ENCODE measurements at regions of chr17 and their contacts with region 1.

Region 1: GRCh38 chr17:48724251-48725003 is 1.4 kb downstream of the PRAC2 start:
- DNase-seq: peak in 1 of 2 experiments; percentile 88
- H3K4me3 ChIP-seq: no peak overlapping the region
- H3K27ac ChIP-seq: no peak overlapping the region
- H3K4me1 ChIP-seq: peaks cover 11 to 32% (median 15%) of the 10 kb centered on the region in 4 experiments; a peak in 6 of 7 replicates
- H3K27me3 ChIP-seq: peaks cover 98 to 100% (median 99%) of the 10 kb centered on the region in 4 experiments
- CTCF ChIP-seq: peak; percentile 60 to 70 (median 68)
- EP300 ChIP-seq: no peak
- POLR2A ChIP-seq: no peak
- RAD21 ChIP-seq: peak; percentile 73 to 74

Region 2: GRCh38 chr17:48704361-48705248 is 19.8 kb before region 1 on chr17:
- CTCF ChIA-PET with region 1: interaction called, 45 read pairs
- POLR2A ChIA-PET with region 1: interaction called, 3 read pairs
- DNase-seq: no peak
- H3K4me3 ChIP-seq: no peak overlapping the region
- H3K27ac ChIP-seq: no peak overlapping the region
- H3K4me1 ChIP-seq: no peaks in the 10 kb centered on the region
- H3K27me3 ChIP-seq: peaks cover 0 to 13% (median 5%) of the 10 kb centered on the region in 4 experiments; a peak in 4 of 7 replicates
- CTCF ChIP-seq: no peak
- EP300 ChIP-seq: no peak
- POLR2A ChIP-seq: no peak
- RAD21 ChIP-seq: no peak

Region 3: GRCh38 chr17:48747445-48748363 is 23.3 kb after region 1 on chr17:
- CTCF ChIA-PET with region 1: interaction called, 44 read pairs
- POLR2A ChIA-PET with region 1: interaction called, 6 read pairs
- DNase-seq: peak in 1 of 2 experiments; percentile 64
- H3K4me3 ChIP-seq: peak overlapping the region in 1 of 4 experiments; percentile 10; a peak in 1 of 8 replicates
- H3K27ac ChIP-seq: no peak overlapping the region
- H3K4me1 ChIP-seq: peaks cover 3 to 7% (median 5%) of the 10 kb centered on the region in 4 experiments
- H3K27me3 ChIP-seq: peaks cover 93 to 100% (median 98%) of the 10 kb centered on the region in 4 experiments
- CTCF ChIP-seq: no peak
- EP300 ChIP-seq: no peak
- POLR2A ChIP-seq: no peak
- RAD21 ChIP-seq: no peak

Region 4: DNA sequence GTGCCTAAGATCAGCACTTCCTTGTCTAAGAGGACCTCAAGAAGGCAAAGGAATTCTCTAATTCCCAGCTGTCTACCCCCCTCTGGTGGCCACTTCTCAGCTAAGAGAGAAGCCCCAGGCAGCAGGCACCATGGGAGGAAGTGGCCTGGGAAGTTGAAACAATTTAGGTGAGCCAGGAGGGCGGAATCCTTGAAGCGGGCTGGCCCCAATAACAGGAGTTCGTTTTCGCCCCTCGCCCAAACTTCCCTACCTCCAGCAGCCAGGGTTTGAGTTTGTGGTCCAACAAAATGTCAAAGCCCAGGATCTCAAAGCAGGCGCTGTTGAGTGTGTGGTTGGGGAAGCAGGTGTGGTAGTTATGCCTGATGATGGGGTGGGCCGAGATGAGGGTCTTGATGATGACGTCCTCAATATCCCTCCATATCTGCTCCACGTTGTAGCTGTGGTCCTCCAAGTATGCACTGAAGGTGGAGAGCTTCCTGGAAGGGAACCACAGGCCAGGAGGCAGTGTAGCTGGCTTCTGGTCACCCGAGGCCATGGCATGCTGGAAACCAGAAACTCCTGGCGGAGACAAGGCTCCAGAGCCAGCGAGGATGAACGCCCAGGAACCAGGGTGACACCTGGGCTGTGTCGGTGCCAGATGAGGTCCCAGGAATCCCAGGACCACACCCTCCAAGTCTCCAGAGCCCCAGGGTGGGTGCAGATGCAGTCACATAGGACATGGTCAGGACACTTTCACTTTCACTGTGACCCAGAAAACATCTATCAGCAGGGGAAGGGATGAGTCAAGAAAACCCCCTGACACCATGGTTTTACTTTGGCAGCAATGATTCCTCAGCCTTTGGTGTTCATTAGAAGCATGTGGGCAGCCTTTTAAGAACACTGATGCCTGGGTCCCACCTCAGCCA is 67.0 kb after region 1 on chr17:
- CTCF ChIA-PET with region 1: interaction called, 147 read pairs
- POLR2A ChIA-PET with region 1: interaction called, 3 read pairs
- DNase-seq: peak; percentile 70 to 85
- H3K4me3 ChIP-seq: no peak overlapping the region
- H3K27ac ChIP-seq: no peak overlapping the region
- H3K4me1 ChIP-seq: peaks cover 0 to 3% (median 0%) of the 10 kb centered on the region in 4 experiments; a peak in 2 of 7 replicates
- H3K27me3 ChIP-seq: peaks cover 0 to 6% (median 1%) of the 10 kb centered on the region in 4 experiments; a peak in 2 of 7 replicates
- CTCF ChIP-seq: peak; percentile 61 to 94 (median 81)
- EP300 ChIP-seq: no peak
- POLR2A ChIP-seq: no peak
- RAD21 ChIP-seq: peak; percentile 84 to 88

Region 5: GRCh38 chr17:48860034-48860433 is 135.6 kb after region 1 on chr17:
- CTCF ChIA-PET with region 1: interaction called, 26 read pairs
- POLR2A ChIA-PET with region 1: no interaction called
- DNase-seq: no peak
- H3K4me3 ChIP-seq: no peak overlapping the region
- H3K27ac ChIP-seq: no peak overlapping the region
- H3K4me1 ChIP-seq: no peaks in the 10 kb centered on the region
- H3K27me3 ChIP-seq: no peaks in the 10 kb centered on the region
- CTCF ChIP-seq: peak in 2 of 3 experiments; percentile 15 to 36; a peak in 2 of 4 replicates
- EP300 ChIP-seq: no peak
- POLR2A ChIP-seq: no peak
- RAD21 ChIP-seq: peak in 1 of 2 experiments; percentile 20; a peak in 1 of 4 replicates

Measured in H1 (cell line).